H1 (cell line): ENCODE measurements at regions of chr9 and their contacts with region 1.

Region 1: GRCh38 chr9:35161713-35162604 is at the start of gene UNC13B:
- DNase-seq: peak; percentile 84 to 97
- H3K4me3 ChIP-seq: peak within 1 kb of the TSS; percentile 54 to 88 (median 84)
- H3K27ac ChIP-seq: peak within 1 kb of the TSS; percentile 69; the same call in 1 of the 2 replicates
- H3K4me1 ChIP-seq: peaks cover 0 to 3% (median 0%) of the 10 kb centered on the region in 4 experiments; a peak in 3 of 7 replicates
- H3K27me3 ChIP-seq: no peaks in the 10 kb centered on the region
- CTCF ChIP-seq: peak in 2 of 3 experiments; percentile 7 to 8; a peak in 2 of 4 replicates
- EP300 ChIP-seq: no peak
- POLR2A ChIP-seq: peak; percentile 64 to 73
- RAD21 ChIP-seq: no peak; a peak in 1 of 4 replicates
- total RNA-seq, gene UNC13B: 46.5 and 51.7 TPM in 2 replicates

Region 2: GRCh38 chr9:35177520-35177919 is 15.6 kb after region 1 on chr9:
- CTCF ChIA-PET with region 1: interaction called, 11 read pairs
- POLR2A ChIA-PET with region 1: interaction called, 4 read pairs
- DNase-seq: no peak
- H3K4me3 ChIP-seq: no peak overlapping the region
- H3K27ac ChIP-seq: no peak overlapping the region
- H3K4me1 ChIP-seq: no peaks in the 10 kb centered on the region
- H3K27me3 ChIP-seq: no peaks in the 10 kb centered on the region
- CTCF ChIP-seq: no peak
- EP300 ChIP-seq: no peak
- POLR2A ChIP-seq: no peak
- RAD21 ChIP-seq: no peak

Region 3: DNA sequence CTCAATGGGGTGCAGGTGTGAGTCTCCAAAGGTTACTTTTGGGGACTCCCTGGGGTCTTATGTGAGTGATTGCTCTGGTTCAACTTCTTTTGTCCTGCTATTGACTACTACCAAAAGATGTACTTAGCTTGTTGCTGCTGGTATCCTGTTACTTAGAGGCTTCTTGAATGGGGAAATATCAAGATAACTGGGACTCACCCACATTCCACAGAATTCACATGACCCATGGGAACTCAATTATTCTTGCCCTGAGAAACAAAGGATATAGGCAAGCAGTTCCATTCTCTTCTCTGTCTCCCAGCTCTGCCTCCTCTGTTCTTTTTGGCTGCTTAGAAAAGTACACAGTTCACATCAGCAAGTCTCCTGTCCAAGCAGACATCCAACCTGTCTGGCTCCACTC is 105.8 kb after region 1 on chr9:
- CTCF ChIA-PET with region 1: no interaction called
- POLR2A ChIA-PET with region 1: no interaction called
- DNase-seq: no peak
- H3K4me3 ChIP-seq: no peak overlapping the region
- H3K27ac ChIP-seq: no peak overlapping the region
- H3K4me1 ChIP-seq: no peaks in the 10 kb centered on the region
- H3K27me3 ChIP-seq: no peaks in the 10 kb centered on the region
- CTCF ChIP-seq: no peak
- EP300 ChIP-seq: no peak
- POLR2A ChIP-seq: no peak
- RAD21 ChIP-seq: no peak